Motor neuron (in vitro differentiated cells): ENCODE measurements at regions of chr22 and their contacts with region 1.

Region 1: DNA sequence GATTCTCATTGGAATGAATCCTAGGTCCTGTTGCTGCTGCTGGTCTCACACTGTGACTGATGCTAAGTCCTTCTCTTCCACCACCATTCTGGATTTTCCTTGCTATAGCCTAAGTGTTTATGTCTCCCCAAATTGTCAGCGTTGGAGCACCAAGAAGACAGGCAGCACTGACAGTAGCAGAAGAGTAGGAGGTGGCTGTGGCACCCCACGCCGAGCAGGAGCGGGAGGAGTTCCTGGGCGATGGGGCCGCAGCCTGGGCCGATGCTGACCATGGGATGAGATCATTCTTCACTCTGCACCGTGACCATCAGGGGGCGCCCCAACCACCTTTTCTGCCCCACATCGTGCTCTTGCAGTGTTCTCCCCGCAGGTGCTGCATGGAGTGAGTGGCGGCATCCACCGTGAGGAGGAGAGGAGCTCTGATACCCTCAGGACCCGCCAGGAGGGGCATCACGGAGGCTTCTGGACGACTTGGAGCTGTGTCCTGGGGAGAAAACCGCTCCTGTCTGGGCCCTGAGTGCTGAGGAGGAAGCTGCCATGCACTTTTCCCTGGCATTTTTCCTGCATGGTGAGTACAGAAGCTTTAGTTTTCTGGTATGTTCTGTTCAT is 57.0 kb downstream of the LRRC74B start:
- ATAC-seq: peak; percentile 95 to 100 (median 99)
- H3K4me3 ChIP-seq: peak overlapping the region; percentile 17 to 26 (median 23)
- H3K27ac ChIP-seq: no peak overlapping the region
- H3K4me1 ChIP-seq: peaks cover 9 to 15% of the 10 kb centered on the region in 2 donors

Region 2: GRCh38 chr22:20885557-20886323 is 217.0 kb before region 1 on chr22:
- in situ Hi-C with region 1: loop called in 1 of 9 experiments (anchors 25 kb)
- ATAC-seq: peak; percentile 91 to 99 (median 98)
- H3K4me3 ChIP-seq: no peak overlapping the region
- H3K27ac ChIP-seq: peak overlapping the region; percentile 33 to 48
- H3K4me1 ChIP-seq: peaks cover 0 to 2% of the 10 kb centered on the region in 2 donors

Region 3: GRCh38 chr22:21001560-21002325 is 101.0 kb before region 1 on chr22 and contains the start of gene THAP7:
- in situ Hi-C with region 1: loop called in 1 of 9 experiments (anchors 25 kb)
- ATAC-seq: peak; percentile 82 to 93 (median 90)
- H3K4me3 ChIP-seq: peak within 1 kb of the TSS; percentile 67 to 93 (median 84)
- H3K27ac ChIP-seq: peak within 1 kb of the TSS; percentile 98 to 100
- H3K4me1 ChIP-seq: peaks cover 17 to 23% of the 10 kb centered on the region in 2 donors
- total RNA-seq, gene THAP7: 21.4 to 33.0 (median 29.4) TPM